GM12878 (cell line): ENCODE measurements at regions of chr9 and their contacts with region 1.

Region 1: GRCh38 chr9:4984621-4985385 is at the start of gene JAK2:
- DNase-seq: peak; percentile 79
- ATAC-seq: peak; percentile 83
- H3K4me3 ChIP-seq: peak within 1 kb of the TSS; percentile 76
- H3K27ac ChIP-seq: peak within 1 kb of the TSS; percentile 89
- H3K4me1 ChIP-seq: peaks cover 26% of the 10 kb centered on the region
- H3K27me3 ChIP-seq: no peaks in the 10 kb centered on the region
- CTCF ChIP-seq: peak in 2 of 3 experiments; percentile 44 to 57; a peak in 3 of 6 replicates
- EP300 ChIP-seq: no peak
- POLR2A ChIP-seq: peak; percentile 93
- RAD21 ChIP-seq: peak; percentile 24
- polyA plus RNA-seq, gene JAK2: 4.1 to 4.9 TPM

Region 2: DNA sequence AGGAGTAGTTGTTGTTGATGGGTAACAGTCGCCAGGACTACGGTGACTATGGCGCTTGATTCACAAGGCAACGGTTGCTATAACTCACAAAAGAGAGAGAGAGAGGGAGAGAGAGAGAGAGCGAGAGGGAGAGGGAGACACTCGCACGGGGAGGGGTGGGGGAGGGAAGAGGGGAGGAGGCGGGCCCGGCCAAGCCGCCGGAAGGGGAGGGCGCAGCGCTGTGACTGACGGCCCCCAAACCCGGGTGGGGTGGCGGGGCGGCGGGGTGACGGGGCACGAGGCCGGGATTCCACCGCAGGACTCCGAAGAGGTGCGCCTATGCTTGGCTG is 1459.0 kb before region 1 on chr9 and contains the start of gene RFX3:
- CTCF ChIA-PET with region 1: no interaction called
- POLR2A ChIA-PET with region 1: no interaction called
- RAD21 ChIA-PET with region 1: no interaction called
- SMC1A ChIA-PET with region 1: no interaction called
- in situ Hi-C with region 1: no loop called
- intact Hi-C with region 1: loop called (anchors 10 kb)
- DNase-seq: peak; percentile 78
- ATAC-seq: peak; percentile 64
- H3K4me3 ChIP-seq: peak within 1 kb of the TSS; percentile 95
- H3K27ac ChIP-seq: peak within 1 kb of the TSS; percentile 96
- H3K4me1 ChIP-seq: no peaks in the 10 kb centered on the region; the same call in 1 of the 2 replicates
- H3K27me3 ChIP-seq: no peaks in the 10 kb centered on the region
- CTCF ChIP-seq: no peak
- EP300 ChIP-seq: peak; percentile 33 to 93; a peak in 3 of 4 replicates
- POLR2A ChIP-seq: no peak
- RAD21 ChIP-seq: 0 out of 2 replicates have a peak, but pooled peaks have one; percentile 1
- polyA plus RNA-seq, gene RFX3: 1.2 to 1.8 TPM

Region 3: GRCh38 chr9:4756420-4756819 is 228.4 kb before region 1 on chr9:
- CTCF ChIA-PET with region 1: interaction called, 147 read pairs
- POLR2A ChIA-PET with region 1: interaction called, 3 read pairs
- RAD21 ChIA-PET with region 1: interaction called, 92 read pairs
- SMC1A ChIA-PET with region 1: interaction called, 107 read pairs
- in situ Hi-C with region 1: loop called (anchors 5 kb)
- intact Hi-C with region 1: no loop called
- DNase-seq: no peak
- ATAC-seq: no peak
- H3K4me3 ChIP-seq: no peak overlapping the region
- H3K27ac ChIP-seq: no peak overlapping the region
- H3K4me1 ChIP-seq: peaks cover 8% of the 10 kb centered on the region
- H3K27me3 ChIP-seq: no peaks in the 10 kb centered on the region
- CTCF ChIP-seq: no peak
- EP300 ChIP-seq: no peak
- POLR2A ChIP-seq: no peak
- RAD21 ChIP-seq: no peak

Region 4: DNA sequence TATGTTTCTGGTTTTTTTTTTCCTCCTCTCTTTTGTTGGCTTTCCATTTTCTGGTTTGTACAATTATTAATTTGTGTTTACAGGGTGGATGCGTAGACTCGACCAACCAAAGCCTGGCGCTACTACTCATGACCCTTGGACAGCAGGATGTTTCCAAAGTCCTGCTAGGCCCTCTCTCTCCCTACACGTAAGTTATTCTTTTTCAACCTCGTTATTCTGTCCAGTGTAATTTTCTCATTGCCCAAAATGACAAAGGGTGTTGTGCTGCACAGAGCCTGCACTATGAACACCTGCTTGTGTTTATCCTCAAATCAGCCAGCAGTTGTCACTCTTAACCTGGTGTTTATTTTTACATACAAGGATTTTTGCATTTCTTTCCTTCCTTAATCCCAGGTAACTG is 135.4 kb before region 1 on chr9:
- CTCF ChIA-PET with region 1: interaction called, 11 read pairs
- POLR2A ChIA-PET with region 1: no interaction called
- RAD21 ChIA-PET with region 1: interaction called, 6 read pairs
- SMC1A ChIA-PET with region 1: interaction called, 12 read pairs
- in situ Hi-C with region 1: no loop called
- intact Hi-C with region 1: loop called (anchors 5 kb)
- DNase-seq: no peak
- ATAC-seq: no peak
- H3K4me3 ChIP-seq: no peak overlapping the region
- H3K27ac ChIP-seq: no peak overlapping the region
- H3K4me1 ChIP-seq: peaks cover 5% of the 10 kb centered on the region
- H3K27me3 ChIP-seq: no peaks in the 10 kb centered on the region
- CTCF ChIP-seq: peak; percentile 2 to 35 (median 22); a peak in 3 of 6 replicates
- EP300 ChIP-seq: no peak
- POLR2A ChIP-seq: no peak
- RAD21 ChIP-seq: peak; percentile 44

Region 5: GRCh38 chr9:4964540-4964939 is 20.3 kb before region 1 on chr9:
- CTCF ChIA-PET with region 1: interaction called, 17 read pairs
- POLR2A ChIA-PET with region 1: interaction called, 18 read pairs
- RAD21 ChIA-PET with region 1: interaction called, 42 read pairs
- SMC1A ChIA-PET with region 1: interaction called, 11 read pairs
- in situ Hi-C with region 1: no loop called
- intact Hi-C with region 1: no loop called
- DNase-seq: no peak
- ATAC-seq: no peak
- H3K4me3 ChIP-seq: no peak overlapping the region
- H3K27ac ChIP-seq: no peak overlapping the region
- H3K4me1 ChIP-seq: no peaks in the 10 kb centered on the region
- H3K27me3 ChIP-seq: no peaks in the 10 kb centered on the region
- CTCF ChIP-seq: no peak
- EP300 ChIP-seq: no peak
- POLR2A ChIP-seq: no peak
- RAD21 ChIP-seq: no peak

Region 6: GRCh38 chr9:5479994-5480694 is 495.3 kb after region 1 on chr9:
- CTCF ChIA-PET with region 1: no interaction called
- POLR2A ChIA-PET with region 1: no interaction called
- RAD21 ChIA-PET with region 1: no interaction called
- SMC1A ChIA-PET with region 1: no interaction called
- in situ Hi-C with region 1: no loop called
- intact Hi-C with region 1: no loop called
- DNase-seq: no peak
- ATAC-seq: peak; percentile 85
- H3K4me3 ChIP-seq: no peak overlapping the region
- H3K27ac ChIP-seq: peak overlapping the region; percentile 62
- H3K4me1 ChIP-seq: peaks cover 27% of the 10 kb centered on the region
- H3K27me3 ChIP-seq: no peaks in the 10 kb centered on the region
- CTCF ChIP-seq: no peak
- EP300 ChIP-seq: peak; percentile 37 to 47; a peak in 2 of 4 replicates
- POLR2A ChIP-seq: no peak
- RAD21 ChIP-seq: no peak

Region 7: GRCh38 chr9:5510360-5510931 is 525.6 kb after region 1 on chr9 and contains the start of gene PDCD1LG2:
- CTCF ChIA-PET with region 1: interaction called, 4 read pairs
- POLR2A ChIA-PET with region 1: no interaction called
- RAD21 ChIA-PET with region 1: no interaction called
- SMC1A ChIA-PET with region 1: no interaction called
- in situ Hi-C with region 1: no loop called
- intact Hi-C with region 1: loop called (anchors 5 kb)
- DNase-seq: peak; percentile 76
- ATAC-seq: peak; percentile 71
- H3K4me3 ChIP-seq: peak within 1 kb of the TSS; percentile 49
- H3K27ac ChIP-seq: peak within 1 kb of the TSS; percentile 82
- H3K4me1 ChIP-seq: peaks cover 39% of the 10 kb centered on the region
- H3K27me3 ChIP-seq: no peaks in the 10 kb centered on the region
- CTCF ChIP-seq: no peak
- EP300 ChIP-seq: peak in 1 of 2 experiments; percentile 89; a peak in 2 of 4 replicates
- POLR2A ChIP-seq: no peak
- RAD21 ChIP-seq: no peak
- polyA plus RNA-seq, gene PDCD1LG2: 1.5 to 2.5 TPM